ENCODE measurements at regions of chr1 and their contacts with region 1.

Region 1: DNA sequence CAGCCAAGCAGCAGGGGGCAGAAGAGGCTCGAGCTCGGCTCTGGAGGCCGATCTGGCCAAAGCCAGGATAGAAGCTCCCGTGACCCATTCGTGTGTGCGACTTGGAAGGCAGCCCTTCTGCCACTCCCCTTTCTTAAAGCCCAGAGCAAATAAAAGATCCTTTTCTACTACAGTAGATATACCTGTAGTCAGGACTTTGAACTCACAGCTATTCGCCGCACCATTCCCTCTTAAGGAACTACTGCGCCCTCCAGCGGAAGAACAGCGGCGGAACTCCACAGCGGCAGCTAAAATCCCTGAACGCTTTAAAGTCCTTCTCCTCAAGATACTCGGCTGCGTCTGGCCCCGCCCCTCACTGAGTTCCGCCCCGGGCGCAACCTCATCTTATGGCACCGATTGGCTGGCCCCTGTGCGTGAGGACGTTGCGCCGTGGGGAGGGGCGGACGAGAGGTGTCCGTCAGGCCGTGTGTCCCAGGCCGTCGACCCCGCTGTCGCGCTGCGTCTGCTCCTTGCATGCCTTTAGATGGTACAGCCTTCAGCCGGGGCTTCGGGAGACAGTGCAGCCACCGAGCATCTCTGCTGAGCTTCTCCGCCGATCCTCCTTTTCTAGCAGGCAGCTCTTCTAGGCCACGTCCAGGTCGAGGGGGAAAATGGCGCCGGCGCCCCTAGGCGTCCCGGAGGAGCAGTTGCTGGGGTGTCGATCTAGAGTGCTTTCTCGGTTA is at the start of gene LRIG2:
- DNase-seq: peak; percentile 99
- H3K4me3 Mint-ChIP-seq: peak within 1 kb of the TSS; percentile 98
- H3K27ac Mint-ChIP-seq: peak within 1 kb of the TSS; percentile 91
- H3K4me1 Mint-ChIP-seq: peaks cover 30% of the 10 kb centered on the region
- H3K27me3 Mint-ChIP-seq: no peaks in the 10 kb centered on the region
- total RNA-seq, gene LRIG2: 7.1 to 8.3 TPM

Region 2: GRCh38 chr1:112803906-112804762 is 268.8 kb before region 1 on chr1:
- CTCF ChIA-PET with region 1: interaction called, 16 read pairs
- POLR2A ChIA-PET with region 1: no interaction called
- intact Hi-C with region 1: loop called (anchors 2 kb)
- DNase-seq: peak; percentile 77
- H3K4me3 Mint-ChIP-seq: no peak overlapping the region
- H3K27ac Mint-ChIP-seq: no peak overlapping the region
- H3K4me1 Mint-ChIP-seq: peaks cover 2% of the 10 kb centered on the region
- H3K27me3 Mint-ChIP-seq: peaks cover 1% of the 10 kb centered on the region

Region 3: GRCh38 chr1:112882271-112882744 is 190.6 kb before region 1 on chr1:
- CTCF ChIA-PET with region 1: interaction called, 80 read pairs
- POLR2A ChIA-PET with region 1: no interaction called
- intact Hi-C with region 1: loop called (anchors 2 kb)
- DNase-seq: no peak
- H3K4me3 Mint-ChIP-seq: no peak overlapping the region
- H3K27ac Mint-ChIP-seq: no peak overlapping the region
- H3K4me1 Mint-ChIP-seq: no peaks in the 10 kb centered on the region
- H3K27me3 Mint-ChIP-seq: peaks cover 2% of the 10 kb centered on the region

Region 4: GRCh38 chr1:113042285-113043143 is 30.4 kb before region 1 on chr1:
- CTCF ChIA-PET with region 1: interaction called, 21 read pairs
- POLR2A ChIA-PET with region 1: interaction called, 3 read pairs
- intact Hi-C with region 1: loop called (anchors 2 kb)
- DNase-seq: peak; percentile 55
- H3K4me3 Mint-ChIP-seq: no peak overlapping the region
- H3K27ac Mint-ChIP-seq: no peak overlapping the region
- H3K4me1 Mint-ChIP-seq: peaks cover 32% of the 10 kb centered on the region
- H3K27me3 Mint-ChIP-seq: no peaks in the 10 kb centered on the region

Region 5: GRCh38 chr1:113088972-113089371 is 16.1 kb after region 1 on chr1:
- CTCF ChIA-PET with region 1: interaction called, 31 read pairs
- POLR2A ChIA-PET with region 1: no interaction called
- intact Hi-C with region 1: no loop called
- DNase-seq: no peak
- H3K4me3 Mint-ChIP-seq: no peak overlapping the region
- H3K27ac Mint-ChIP-seq: no peak overlapping the region
- H3K4me1 Mint-ChIP-seq: peaks cover 22% of the 10 kb centered on the region
- H3K27me3 Mint-ChIP-seq: no peaks in the 10 kb centered on the region

Region 6: DNA sequence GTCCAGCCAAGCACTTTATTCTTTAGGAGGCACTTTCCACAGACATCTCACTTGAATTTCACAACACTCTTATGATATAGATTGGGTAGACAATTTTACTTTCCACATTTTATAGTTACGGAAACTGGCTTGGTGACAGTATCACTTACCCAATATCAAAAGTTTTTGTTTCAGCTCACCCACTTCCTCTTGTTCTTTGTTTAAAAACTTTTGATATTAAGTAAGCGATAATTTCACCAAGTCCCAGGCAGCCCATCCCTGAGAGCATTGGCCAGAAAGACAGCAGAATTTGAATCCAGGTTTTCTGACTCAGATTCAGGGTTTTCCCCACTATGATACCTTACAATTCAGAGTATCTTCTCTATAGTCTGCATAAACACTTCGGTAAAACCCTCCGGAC is 60.1 kb after region 1 on chr1:
- CTCF ChIA-PET with region 1: interaction called, 13 read pairs
- POLR2A ChIA-PET with region 1: no interaction called
- intact Hi-C with region 1: loop called (anchors 5 kb)
- DNase-seq: peak; percentile 63
- H3K4me3 Mint-ChIP-seq: no peak overlapping the region
- H3K27ac Mint-ChIP-seq: peak overlapping the region; percentile 18
- H3K4me1 Mint-ChIP-seq: peaks cover 43% of the 10 kb centered on the region
- H3K27me3 Mint-ChIP-seq: no peaks in the 10 kb centered on the region

Region 7: DNA sequence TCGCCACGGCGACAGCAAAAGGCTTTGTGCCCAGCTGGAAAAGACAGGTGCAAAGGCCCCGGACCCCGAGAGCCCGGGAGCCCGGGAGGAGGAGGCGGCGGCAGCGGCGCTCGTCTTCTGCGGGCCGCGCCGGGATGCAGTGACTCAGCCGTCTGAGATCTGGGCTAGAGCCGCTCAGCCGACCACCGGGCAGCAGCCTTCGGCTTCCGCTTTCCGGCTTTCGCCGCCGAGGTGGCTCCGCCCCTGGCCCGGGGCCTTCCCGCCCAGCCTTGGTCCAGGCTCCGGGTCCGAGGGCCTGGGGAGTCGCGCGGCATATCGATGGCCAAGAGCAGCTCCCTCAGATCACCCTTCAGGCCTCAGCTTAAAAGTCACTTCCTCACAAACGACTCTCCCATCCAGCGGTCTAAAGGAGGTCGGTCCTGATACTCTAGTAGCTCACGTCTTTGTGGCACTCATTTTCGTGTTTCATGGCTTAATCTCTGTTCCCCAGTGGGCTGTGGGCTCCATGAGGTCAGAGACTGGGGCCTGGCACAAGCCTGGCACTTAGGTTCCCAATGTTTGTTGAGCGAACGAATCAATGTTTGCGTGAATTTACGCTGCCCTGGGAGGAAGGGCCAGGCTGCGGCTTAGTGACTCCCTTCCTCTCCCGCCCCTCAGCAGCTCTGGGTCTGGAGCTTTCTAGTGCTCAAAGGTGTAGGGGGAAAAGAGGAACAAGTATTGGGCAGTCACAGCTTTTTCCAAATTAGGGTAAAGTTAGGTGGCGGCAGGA is 686.6 kb after region 1 on chr1 and contains the start of gene PHTF1:
- CTCF ChIA-PET with region 1: interaction called, 3 read pairs
- POLR2A ChIA-PET with region 1: no interaction called
- intact Hi-C with region 1: loop called (anchors 2 kb)
- DNase-seq: peak; percentile 76
- H3K4me3 Mint-ChIP-seq: peak within 1 kb of the TSS; percentile 87
- H3K27ac Mint-ChIP-seq: peak within 1 kb of the TSS; percentile 99
- H3K4me1 Mint-ChIP-seq: peaks cover 26% of the 10 kb centered on the region
- H3K27me3 Mint-ChIP-seq: no peaks in the 10 kb centered on the region
- total RNA-seq, gene PHTF1: 12.6 to 12.9 TPM

Measured in activated CD4-positive, alpha-beta memory T cell treated with anti-CD3 and anti-CD28 coated beads for 36 hours (primary cell).